Heart left ventricle (tissue), 16 donors: ENCODE measurements at regions of chr7 and their contacts with region 1.

Region 1: GRCh38 chr7:120920591-120920990 is 30.0 kb upstream of the ING3 start:
- DNase-seq: no peak
- ATAC-seq: no peak
- H3K4me3 ChIP-seq: no peak overlapping the region
- H3K27ac ChIP-seq: no peak overlapping the region
- H3K4me1 ChIP-seq: peaks cover 0 to 3% (median 0%) of the 10 kb centered on the region in 12 donors
- H3K27me3 ChIP-seq: no peaks in the 10 kb centered on the region
- CTCF ChIP-seq: no peak
- POLR2A ChIP-seq: no peak

Region 2: GRCh38 chr7:120877701-120878100 is 42.9 kb before region 1 on chr7:
- intact Hi-C with region 1: loop called in 1 of 10 experiments (anchors 5 kb)
- DNase-seq: no peak
- ATAC-seq: no peak
- H3K4me3 ChIP-seq: no peak overlapping the region
- H3K27ac ChIP-seq: no peak overlapping the region
- H3K4me1 ChIP-seq: no peaks in the 10 kb centered on the region
- H3K27me3 ChIP-seq: no peaks in the 10 kb centered on the region
- CTCF ChIP-seq: no peak
- POLR2A ChIP-seq: no peak

Region 3: GRCh38 chr7:121099572-121099971 is 179.0 kb after region 1 on chr7:
- intact Hi-C with region 1: no loop called
- DNase-seq: no peak
- ATAC-seq: no peak
- H3K4me3 ChIP-seq: no peak overlapping the region
- H3K27ac ChIP-seq: no peak overlapping the region
- H3K4me1 ChIP-seq: peaks cover 0 to 31% (median 15%) of the 10 kb centered on the region in 12 donors
- H3K27me3 ChIP-seq: no peaks in the 10 kb centered on the region
- CTCF ChIP-seq: no peak
- POLR2A ChIP-seq: no peak